CD8-positive, alpha-beta T cell (primary cell): ENCODE measurements at regions of chr2 and their contacts with region 1.

Region 1: DNA sequence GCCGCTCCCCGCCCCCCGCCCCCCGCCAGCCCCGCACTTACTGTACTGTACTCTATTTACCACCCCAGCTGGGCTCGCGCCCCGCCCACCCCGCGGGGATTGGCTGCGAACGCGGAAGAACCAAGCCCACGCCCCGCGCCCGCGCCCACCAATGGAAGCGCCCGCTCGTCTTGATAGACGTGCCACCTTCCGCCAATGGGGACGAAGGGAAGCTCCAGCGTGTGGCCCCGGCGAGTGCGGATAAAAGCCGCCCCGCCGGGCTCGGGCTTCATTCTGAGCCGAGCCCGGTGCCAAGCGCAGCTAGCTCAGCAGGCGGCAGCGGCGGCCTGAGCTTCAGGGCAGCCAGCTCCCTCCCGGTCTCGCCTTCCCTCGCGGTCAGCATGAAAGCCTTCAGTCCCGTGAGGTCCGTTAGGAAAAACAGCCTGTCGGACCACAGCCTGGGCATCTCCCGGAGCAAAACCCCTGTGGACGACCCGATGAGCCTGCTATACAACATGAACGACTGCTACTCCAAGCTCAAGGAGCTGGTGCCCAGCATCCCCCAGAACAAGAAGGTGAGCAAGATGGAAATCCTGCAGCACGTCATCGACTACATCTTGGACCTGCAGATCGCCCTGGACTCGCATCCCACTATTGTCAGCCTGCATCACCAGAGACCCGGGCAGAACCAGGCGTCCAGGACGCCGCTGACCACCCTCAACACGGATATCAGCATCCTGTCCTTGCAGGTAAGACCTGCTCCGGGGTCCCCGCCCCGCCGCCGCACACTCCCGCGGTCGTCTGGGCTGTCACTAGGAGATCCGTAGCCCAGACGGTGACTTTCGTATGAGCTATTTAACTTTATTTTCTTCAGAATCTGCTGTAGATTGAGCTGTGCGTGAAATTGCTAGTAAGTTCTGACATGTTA is at the start of gene ID2:
- DNase-seq: peak; percentile 96 to 100 (median 99)
- ATAC-seq: peak; percentile 74
- H3K4me3 ChIP-seq: peak within 1 kb of the TSS; percentile 89 to 94
- H3K4me3 Mint-ChIP-seq: peak within 1 kb of the TSS; percentile 99
- H3K27ac ChIP-seq: peak within 1 kb of the TSS; percentile 80 to 82
- H3K27ac Mint-ChIP-seq: peak within 1 kb of the TSS; percentile 97
- H3K4me1 ChIP-seq: peaks cover 40% of the 10 kb centered on the region
- H3K4me1 Mint-ChIP-seq: peaks cover 45% of the 10 kb centered on the region
- H3K27me3 ChIP-seq: peaks cover 3 to 9% of the 10 kb centered on the region in 2 experiments
- H3K27me3 Mint-ChIP-seq: peaks cover 15% of the 10 kb centered on the region
- CTCF ChIP-seq: no peak
- total RNA-seq, gene ID2: 290 to 298 TPM

Region 2: DNA sequence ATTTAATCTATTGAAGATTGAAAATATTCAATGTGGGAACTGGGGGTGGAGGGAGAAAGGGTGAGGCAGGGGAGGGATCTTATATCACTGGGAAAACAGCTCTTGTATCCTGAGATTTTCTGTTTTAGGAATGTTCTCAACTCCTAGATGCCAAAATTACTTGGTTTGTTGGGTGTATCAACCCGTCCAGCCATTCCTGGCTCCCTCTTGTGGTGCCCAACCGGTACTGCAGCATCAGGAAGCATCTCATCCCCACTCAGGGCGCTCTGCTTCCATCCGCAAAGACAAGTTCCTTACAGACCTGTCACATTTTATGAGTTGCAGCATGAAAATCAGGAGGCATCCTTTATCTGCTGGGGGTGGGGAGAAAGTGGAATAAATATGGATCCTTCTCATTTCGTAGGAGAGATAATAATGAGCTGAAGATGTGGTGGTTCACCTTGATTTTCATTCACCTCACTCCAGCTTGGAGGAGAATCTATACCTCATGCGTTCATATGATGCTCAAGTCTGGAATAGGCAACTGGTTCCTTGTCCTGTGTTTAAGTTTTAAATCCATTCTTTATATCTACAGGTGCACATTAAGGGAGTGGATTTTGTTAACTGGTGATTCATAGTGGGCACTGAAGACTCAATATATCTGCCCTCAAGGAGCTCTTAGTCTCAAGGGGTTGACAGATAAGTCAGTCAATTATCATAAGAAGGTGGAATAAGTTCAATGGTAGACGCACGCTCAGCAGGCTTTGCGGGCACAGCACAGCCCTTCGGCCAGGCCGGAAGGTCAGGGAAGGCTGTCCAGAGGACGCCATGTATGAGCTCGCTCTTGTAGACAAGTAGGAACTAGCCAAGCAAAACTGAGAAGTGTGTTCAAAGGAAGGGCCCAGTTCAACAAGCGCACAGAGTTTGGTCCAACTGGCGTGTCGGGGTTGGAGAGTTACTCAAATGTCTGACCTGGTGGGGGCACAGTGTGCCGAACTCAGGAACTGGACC is 1637.5 kb before region 1 on chr2:
- CTCF ChIA-PET with region 1: no interaction called
- POLR2A ChIA-PET with region 1: no interaction called
- intact Hi-C with region 1: loop called in 1 of 2 experiments (anchors 5 kb)
- DNase-seq: peak; percentile 13 to 81 (median 62)
- ATAC-seq: peak; percentile 86
- H3K4me3 ChIP-seq: no peak overlapping the region
- H3K4me3 Mint-ChIP-seq: no peak overlapping the region
- H3K27ac ChIP-seq: no peak overlapping the region
- H3K27ac Mint-ChIP-seq: peak overlapping the region; percentile 15
- H3K4me1 ChIP-seq: no peaks in the 10 kb centered on the region
- H3K4me1 Mint-ChIP-seq: peaks cover 16% of the 10 kb centered on the region
- H3K27me3 ChIP-seq: no peaks in the 10 kb centered on the region
- H3K27me3 Mint-ChIP-seq: no peaks in the 10 kb centered on the region
- CTCF ChIP-seq: peak; percentile 97

Region 3: DNA sequence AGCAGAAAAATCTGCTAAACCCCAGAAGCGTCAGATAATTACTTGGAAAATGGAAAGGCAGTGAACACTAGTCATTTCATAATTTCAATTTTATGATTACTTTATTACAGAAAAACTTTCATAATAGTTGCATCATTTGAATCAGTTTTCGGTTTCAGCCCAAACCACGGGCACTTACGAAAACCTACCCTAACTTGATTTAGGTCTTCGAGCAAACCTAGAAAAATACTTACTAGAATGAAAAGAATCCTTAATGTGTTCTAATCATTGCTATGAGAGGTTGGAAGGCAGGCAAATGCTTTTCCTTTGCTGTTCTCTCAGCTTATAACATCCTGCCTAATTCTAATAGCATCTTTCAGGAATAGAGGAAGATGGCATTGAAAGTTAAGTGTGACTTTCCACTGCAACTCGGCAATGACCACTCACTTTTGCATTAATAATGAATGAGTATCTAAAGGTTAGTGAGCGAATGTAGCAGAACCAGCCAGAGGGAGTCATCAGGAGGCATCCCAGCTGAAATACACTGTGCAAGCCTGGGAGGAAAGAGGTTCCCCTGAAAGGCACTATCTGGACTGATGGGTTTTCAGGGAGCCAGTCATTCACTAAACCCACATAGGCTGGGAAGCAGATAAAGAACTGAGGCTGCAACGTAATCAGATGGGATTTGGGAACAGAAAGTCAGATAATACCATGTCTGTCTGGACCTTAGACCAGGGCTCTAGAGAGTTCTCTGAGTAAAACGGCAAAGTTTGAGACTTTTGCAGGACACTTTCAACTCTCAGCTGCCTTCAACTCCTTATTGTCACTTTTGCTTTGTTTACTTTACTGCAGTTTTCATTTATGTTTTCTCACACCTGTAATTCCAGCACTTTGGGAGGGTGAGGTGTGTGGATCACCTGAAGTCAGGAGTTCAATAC is 1244.1 kb before region 1 on chr2:
- CTCF ChIA-PET with region 1: no interaction called
- POLR2A ChIA-PET with region 1: interaction called, 10 read pairs
- intact Hi-C with region 1: no loop called
- DNase-seq: peak in 1 of 9 experiments; percentile 34
- ATAC-seq: no peak
- H3K4me3 ChIP-seq: no peak overlapping the region
- H3K4me3 Mint-ChIP-seq: no peak overlapping the region
- H3K27ac ChIP-seq: peak overlapping the region in 1 of 2 experiments; percentile 73
- H3K27ac Mint-ChIP-seq: peak overlapping the region; percentile 74
- H3K4me1 ChIP-seq: peaks cover 39% of the 10 kb centered on the region
- H3K4me1 Mint-ChIP-seq: peaks cover 70% of the 10 kb centered on the region
- H3K27me3 ChIP-seq: no peaks in the 10 kb centered on the region
- H3K27me3 Mint-ChIP-seq: no peaks in the 10 kb centered on the region
- CTCF ChIP-seq: no peak

Region 4: DNA sequence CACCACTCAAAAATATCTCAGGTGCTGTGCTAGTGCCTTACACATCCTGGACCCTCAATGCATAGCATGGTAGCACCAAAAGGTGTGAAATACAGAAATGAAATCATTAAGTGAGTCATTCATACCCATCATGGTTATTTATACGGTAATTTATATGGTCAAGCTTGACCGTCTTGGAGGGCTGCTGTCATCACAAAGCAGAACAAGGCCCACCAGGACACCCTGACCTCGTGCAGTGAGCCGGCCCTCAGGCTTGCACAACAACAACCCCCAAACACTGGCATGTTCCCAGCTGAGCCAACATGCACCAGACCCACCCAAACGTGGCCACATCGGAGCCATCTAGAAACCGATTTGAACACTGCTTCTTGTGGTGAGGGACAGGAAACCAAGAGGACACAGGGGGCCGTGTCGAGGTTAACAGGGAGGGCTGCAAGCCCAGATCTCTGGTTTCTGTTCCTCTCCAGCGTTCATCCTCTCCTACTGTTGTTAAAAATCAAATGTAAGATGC is 378.7 kb before region 1 on chr2:
- CTCF ChIA-PET with region 1: interaction called, 3 read pairs
- POLR2A ChIA-PET with region 1: interaction called, 3 read pairs
- intact Hi-C with region 1: loop called (anchors 2 kb)
- DNase-seq: peak; percentile 63 to 87 (median 82)
- ATAC-seq: peak; percentile 83
- H3K4me3 ChIP-seq: peak overlapping the region; percentile 10 to 25
- H3K4me3 Mint-ChIP-seq: peak overlapping the region; percentile 69
- H3K27ac ChIP-seq: peak overlapping the region in 1 of 2 experiments; percentile 63
- H3K27ac Mint-ChIP-seq: peak overlapping the region; percentile 74
- H3K4me1 ChIP-seq: peaks cover 49% of the 10 kb centered on the region
- H3K4me1 Mint-ChIP-seq: peaks cover 55% of the 10 kb centered on the region
- H3K27me3 ChIP-seq: no peaks in the 10 kb centered on the region
- H3K27me3 Mint-ChIP-seq: peaks cover 1% of the 10 kb centered on the region
- CTCF ChIP-seq: peak; percentile 36

Region 5: DNA sequence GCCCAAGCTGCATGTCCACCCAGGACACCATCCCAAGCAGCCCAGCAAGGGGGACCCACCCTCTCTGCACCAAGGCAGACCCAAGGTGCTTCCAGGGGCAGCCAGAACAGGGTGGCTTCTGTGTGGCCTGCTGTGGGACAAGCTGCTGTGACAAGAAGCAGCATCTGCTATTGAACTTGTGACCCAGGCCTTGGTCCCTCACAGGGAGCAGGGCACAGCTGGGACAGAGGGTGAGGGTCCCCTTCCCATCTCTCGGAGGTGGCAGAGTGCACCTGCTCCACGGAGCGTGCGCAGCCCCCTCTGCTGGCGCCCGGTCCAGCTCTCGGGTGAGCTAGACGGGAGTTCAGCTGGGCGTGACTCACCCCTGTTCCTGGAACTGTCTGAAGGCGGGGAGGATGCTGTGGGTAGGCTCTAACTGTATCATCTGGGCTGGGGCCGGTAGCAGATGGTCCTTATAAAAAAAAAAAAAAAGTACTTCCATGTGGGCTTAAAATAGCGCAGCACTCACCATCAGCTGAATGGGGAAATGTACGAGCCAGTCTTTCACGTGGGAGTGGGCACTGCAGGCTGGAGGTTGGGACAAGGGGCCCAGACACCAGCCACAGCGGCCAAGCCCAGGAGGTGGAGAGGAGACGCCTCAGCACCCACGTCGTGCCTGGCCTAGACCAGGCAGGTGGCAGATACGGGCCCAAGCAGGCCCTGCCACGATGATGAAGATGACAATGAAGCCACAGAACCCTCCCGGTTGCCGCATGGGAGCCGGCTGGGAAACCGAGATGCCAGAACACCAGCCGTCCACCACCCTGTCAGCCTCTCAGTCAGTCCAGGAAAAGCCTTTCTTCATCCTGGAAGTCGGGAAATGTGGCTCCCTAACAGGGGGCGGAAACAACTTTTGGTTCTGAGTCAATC is 137.0 kb before region 1 on chr2:
- CTCF ChIA-PET with region 1: no interaction called
- POLR2A ChIA-PET with region 1: interaction called, 5 read pairs
- intact Hi-C with region 1: loop called (anchors 5 to 10 kb)
- DNase-seq: peak; percentile 21 to 90 (median 76)
- ATAC-seq: peak; percentile 87
- H3K4me3 ChIP-seq: no peak overlapping the region
- H3K4me3 Mint-ChIP-seq: no peak overlapping the region
- H3K27ac ChIP-seq: peak overlapping the region in 1 of 2 experiments; percentile 88
- H3K27ac Mint-ChIP-seq: peak overlapping the region; percentile 75
- H3K4me1 ChIP-seq: peaks cover 29% of the 10 kb centered on the region
- H3K4me1 Mint-ChIP-seq: peaks cover 40% of the 10 kb centered on the region
- H3K27me3 ChIP-seq: no peaks in the 10 kb centered on the region
- H3K27me3 Mint-ChIP-seq: no peaks in the 10 kb centered on the region
- CTCF ChIP-seq: peak; percentile 42

Region 6: GRCh38 chr2:8627019-8627691 is 54.9 kb before region 1 on chr2:
- CTCF ChIA-PET with region 1: no interaction called
- POLR2A ChIA-PET with region 1: no interaction called
- intact Hi-C with region 1: no loop called
- DNase-seq: no peak
- ATAC-seq: no peak
- H3K4me3 ChIP-seq: no peak overlapping the region
- H3K4me3 Mint-ChIP-seq: no peak overlapping the region
- H3K27ac ChIP-seq: no peak overlapping the region
- H3K27ac Mint-ChIP-seq: no peak overlapping the region
- H3K4me1 ChIP-seq: peaks cover 7% of the 10 kb centered on the region
- H3K4me1 Mint-ChIP-seq: peaks cover 7% of the 10 kb centered on the region
- H3K27me3 ChIP-seq: no peaks in the 10 kb centered on the region
- H3K27me3 Mint-ChIP-seq: no peaks in the 10 kb centered on the region
- CTCF ChIP-seq: no peak

Region 7: DNA sequence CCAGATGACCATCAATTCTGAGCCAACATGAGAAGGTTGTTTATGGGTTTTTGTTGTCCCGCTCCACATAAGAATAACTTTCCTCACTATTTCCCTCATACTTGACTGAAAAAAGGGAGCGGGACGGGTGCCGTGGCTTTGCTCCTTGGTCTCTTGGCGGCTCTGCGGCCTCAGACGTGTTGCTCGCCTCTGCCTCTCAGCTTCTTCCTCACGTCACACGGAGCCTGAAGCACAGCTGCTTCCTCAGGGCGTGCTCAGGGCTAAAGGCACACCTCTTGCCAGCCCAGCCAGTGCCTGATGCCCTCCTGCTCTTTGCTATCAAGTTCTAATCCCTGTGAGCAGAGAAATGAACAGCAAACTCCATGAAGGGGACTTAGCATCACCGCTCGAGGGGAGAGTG is 18.0 kb before region 1 on chr2:
- CTCF ChIA-PET with region 1: interaction called, 3 read pairs
- POLR2A ChIA-PET with region 1: interaction called, 24 read pairs
- intact Hi-C with region 1: loop called in 1 of 2 experiments (anchors 2 kb)
- DNase-seq: peak in 4 of 9 experiments; percentile 25 to 54 (median 32)
- ATAC-seq: peak; percentile 47
- H3K4me3 ChIP-seq: no peak overlapping the region
- H3K4me3 Mint-ChIP-seq: peak overlapping the region; percentile 19
- H3K27ac ChIP-seq: no peak overlapping the region
- H3K27ac Mint-ChIP-seq: peak overlapping the region; percentile 5
- H3K4me1 ChIP-seq: peaks cover 20% of the 10 kb centered on the region
- H3K4me1 Mint-ChIP-seq: peaks cover 24% of the 10 kb centered on the region
- H3K27me3 ChIP-seq: no peaks in the 10 kb centered on the region
- H3K27me3 Mint-ChIP-seq: peaks cover 3% of the 10 kb centered on the region
- CTCF ChIP-seq: no peak